ENCODE measurements at regions of chr6 and their contacts with region 1.

Region 1: GRCh38 chr6:43769526-43770416 is at the start of gene VEGFA:
- DNase-seq: peak; percentile 92 to 97
- H3K4me3 ChIP-seq: peak within 1 kb of the TSS; percentile 65 to 85 (median 80)
- H3K27ac ChIP-seq: peak within 1 kb of the TSS; percentile 96 to 99 (median 96)
- H3K4me1 ChIP-seq: peaks cover 35 to 72% (median 55%) of the 10 kb centered on the region in 4 donors
- H3K27me3 ChIP-seq: no peaks in the 10 kb centered on the region
- CTCF ChIP-seq: peak in 5 of 7 experiments; percentile 96 to 99 (median 97)
- EP300 ChIP-seq: no peak
- POLR2A ChIP-seq: peak in 2 of 4 donors; percentile 50 to 79
- total RNA-seq, gene VEGFA: 193 to 438 (median 352) TPM

Region 2: GRCh38 chr6:43667245-43668150 is 102.3 kb before region 1 on chr6:
- intact Hi-C with region 1: loop called (anchors 10 kb)
- DNase-seq: peak; percentile 92 to 95
- H3K4me3 ChIP-seq: no peak overlapping the region
- H3K27ac ChIP-seq: peak overlapping the region; percentile 39 to 74 (median 53)
- H3K4me1 ChIP-seq: peaks cover 39 to 55% (median 50%) of the 10 kb centered on the region in 4 donors
- H3K27me3 ChIP-seq: no peaks in the 10 kb centered on the region
- CTCF ChIP-seq: peak in 6 of 7 experiments; percentile 25 to 99 (median 96)
- EP300 ChIP-seq: no peak
- POLR2A ChIP-seq: no peak

Region 3: GRCh38 chr6:44074439-44075136 is 304.8 kb after region 1 on chr6:
- intact Hi-C with region 1: loop called (anchors 5 kb)
- DNase-seq: peak; percentile 74 to 96
- H3K4me3 ChIP-seq: no peak overlapping the region
- H3K27ac ChIP-seq: peak overlapping the region in 4 of 5 donors; percentile 5 to 82 (median 76)
- H3K4me1 ChIP-seq: peaks cover 29 to 56% (median 44%) of the 10 kb centered on the region in 4 donors
- H3K27me3 ChIP-seq: peaks cover 0 to 27% (median 0%) of the 10 kb centered on the region in 3 donors
- CTCF ChIP-seq: peak in 6 of 7 experiments; percentile 60 to 95 (median 89)
- EP300 ChIP-seq: no peak
- POLR2A ChIP-seq: no peak